ENCODE measurements at regions of chr1 and their contacts with region 1.

Region 1: DNA sequence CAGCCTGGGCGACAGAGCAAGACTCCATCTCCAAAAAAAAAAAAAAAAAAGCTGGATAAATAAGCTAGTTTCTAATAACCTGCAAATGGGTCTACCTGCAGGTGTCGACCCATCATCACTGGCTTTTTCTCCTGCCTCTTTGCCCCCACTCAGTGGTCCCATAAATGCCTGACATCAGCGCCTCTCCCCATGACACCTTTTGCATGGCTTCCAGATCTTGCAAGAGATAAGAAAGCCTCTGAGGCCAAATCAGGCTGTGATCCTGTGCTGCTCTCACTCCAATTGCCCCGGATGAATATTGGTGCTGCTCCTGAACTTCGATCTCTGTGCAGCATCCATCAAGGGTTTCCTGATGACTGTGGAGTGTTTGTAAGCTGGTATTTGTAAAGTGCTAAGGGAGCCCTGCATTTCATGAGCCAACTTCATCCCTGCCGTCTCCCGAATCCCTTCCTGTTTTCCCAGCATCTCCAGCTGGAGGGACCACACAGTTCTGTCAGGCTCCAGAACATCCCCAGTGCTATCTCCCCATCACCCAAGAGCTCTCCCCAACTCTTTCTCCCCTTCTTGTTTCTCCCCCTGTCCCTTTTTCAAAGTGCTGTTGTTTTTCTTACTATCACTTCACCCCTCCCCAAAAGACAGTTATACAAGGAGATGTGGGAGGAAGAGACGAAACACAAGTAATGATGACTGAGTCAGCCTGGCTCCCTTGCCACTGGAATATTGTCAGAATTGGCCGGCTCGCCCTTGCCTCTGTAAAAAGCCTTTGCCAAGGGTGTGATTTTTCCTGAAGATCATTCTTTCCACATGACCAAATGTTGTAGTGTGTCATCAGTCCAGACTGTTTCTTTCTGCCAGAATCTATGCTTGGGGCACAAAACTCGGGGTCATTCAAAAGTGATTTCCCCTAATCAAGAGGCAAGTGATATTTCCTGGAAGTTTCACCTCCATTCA is 2.8 kb upstream of the EFHD2 start:
- DNase-seq: no peak
- H3K4me3 ChIP-seq: no peak overlapping the region
- H3K27ac ChIP-seq: no peak overlapping the region
- H3K4me1 ChIP-seq: peaks cover 0 to 24% (median 20%) of the 10 kb centered on the region in 4 experiments
- H3K27me3 ChIP-seq: peaks cover 0 to 5% (median 0%) of the 10 kb centered on the region in 5 experiments

Region 2: DNA sequence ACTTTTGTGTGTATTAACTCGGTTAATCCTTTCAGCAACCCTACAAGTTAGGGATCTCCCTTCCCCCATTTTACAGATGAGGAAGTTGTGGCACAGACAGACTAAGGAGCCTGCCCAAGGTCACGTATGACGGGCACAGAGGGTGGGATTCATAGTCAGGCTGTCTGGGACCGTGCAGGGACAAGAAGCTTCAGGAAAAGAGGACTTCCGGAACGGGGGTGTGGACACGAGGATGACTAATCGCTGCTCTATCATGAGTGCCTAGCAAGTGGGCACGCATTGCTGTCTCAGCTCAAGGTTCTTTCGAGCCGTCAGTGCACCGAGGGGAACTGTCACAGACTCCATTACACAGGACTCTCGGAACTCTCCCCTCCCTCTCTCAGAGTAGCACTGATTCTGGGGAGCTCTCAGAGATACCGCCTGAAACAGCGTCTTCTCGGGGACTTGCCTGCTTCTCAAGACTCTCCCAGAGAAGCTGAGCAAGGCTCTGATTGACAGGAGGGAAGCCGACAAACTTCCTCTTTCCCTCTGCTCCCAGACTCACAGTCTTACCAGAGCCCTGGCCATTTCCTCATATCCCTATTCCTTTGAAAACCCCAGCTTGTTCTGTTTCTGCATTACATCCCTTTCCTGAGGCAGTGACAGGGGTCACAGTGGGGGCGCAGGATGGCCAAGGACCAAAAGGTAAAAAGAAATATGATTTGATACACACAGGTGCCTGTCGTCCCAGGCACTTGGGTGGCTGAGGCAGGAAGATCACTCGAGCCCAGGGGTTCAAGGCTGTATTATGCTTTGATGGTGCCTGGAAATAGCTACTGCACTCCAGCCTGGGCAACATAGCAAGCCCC is 145.5 kb before region 1 on chr1:
- CTCF ChIA-PET with region 1: no interaction called
- POLR2A ChIA-PET with region 1: no interaction called
- DNase-seq: peak; percentile 45 to 78 (median 70)
- H3K4me3 ChIP-seq: peak overlapping the region in 4 of 7 experiments; percentile 27 to 53 (median 43)
- H3K27ac ChIP-seq: no peak overlapping the region
- H3K4me1 ChIP-seq: peaks cover 4 to 34% (median 13%) of the 10 kb centered on the region in 4 experiments
- H3K27me3 ChIP-seq: no peaks in the 10 kb centered on the region

Region 3: GRCh38 chr1:15384301-15384901 is 22.5 kb before region 1 on chr1:
- CTCF ChIA-PET with region 1: interaction called, 16 read pairs
- POLR2A ChIA-PET with region 1: interaction called, 3 read pairs
- DNase-seq: peak; percentile 21 to 65 (median 64)
- H3K4me3 ChIP-seq: peak overlapping the region in 4 of 7 experiments; percentile 25 to 75 (median 53)
- H3K27ac ChIP-seq: no peak overlapping the region
- H3K4me1 ChIP-seq: peaks cover 0 to 23% (median 12%) of the 10 kb centered on the region in 4 experiments
- H3K27me3 ChIP-seq: no peaks in the 10 kb centered on the region

Measured in common myeloid progenitor, CD34-positive (primary cell).